Endothelial cell of umbilical vein (primary cell): ENCODE measurements at regions of chr14 and their contacts with region 1.

Region 1: GRCh38 chr14:22200977-22201605 is 387.9 kb downstream of the DAD1 start:
- DNase-seq: peak; percentile 49
- H3K4me3 ChIP-seq: no peak overlapping the region
- H3K27ac ChIP-seq: no peak overlapping the region
- H3K4me1 ChIP-seq: no peaks in the 10 kb centered on the region
- H3K27me3 ChIP-seq: peaks cover 7 to 11% of the 10 kb centered on the region in 2 experiments
- CTCF ChIP-seq: peak; percentile 56 to 66
- POLR2A ChIP-seq: no peak

Region 2: GRCh38 chr14:22112004-22112403 is 89.1 kb before region 1 on chr14:
- CTCF ChIA-PET with region 1: interaction called, 12 read pairs
- POLR2A ChIA-PET with region 1: no interaction called
- dilution Hi-C with region 1: no loop called
- intact Hi-C with region 1: no loop called
- DNase-seq: peak; percentile 25
- H3K4me3 ChIP-seq: no peak overlapping the region
- H3K27ac ChIP-seq: no peak overlapping the region
- H3K4me1 ChIP-seq: no peaks in the 10 kb centered on the region
- H3K27me3 ChIP-seq: peaks cover 5 to 19% of the 10 kb centered on the region in 2 experiments
- CTCF ChIP-seq: peak; percentile 48 to 64
- POLR2A ChIP-seq: no peak

Region 3: GRCh38 chr14:22185191-22185590 is 15.9 kb before region 1 on chr14:
- CTCF ChIA-PET with region 1: interaction called, 30 read pairs
- POLR2A ChIA-PET with region 1: no interaction called
- dilution Hi-C with region 1: no loop called
- intact Hi-C with region 1: no loop called
- DNase-seq: peak; percentile 13
- H3K4me3 ChIP-seq: no peak overlapping the region
- H3K27ac ChIP-seq: peak overlapping the region; percentile 43
- H3K4me1 ChIP-seq: peaks cover 10% of the 10 kb centered on the region
- H3K27me3 ChIP-seq: peaks cover 0 to 2% of the 10 kb centered on the region in 2 experiments
- CTCF ChIP-seq: peak in 1 of 2 donors; percentile 6
- POLR2A ChIP-seq: no peak

Region 4: GRCh38 chr14:22221508-22221907 is 20.4 kb after region 1 on chr14:
- CTCF ChIA-PET with region 1: interaction called, 22 read pairs
- POLR2A ChIA-PET with region 1: no interaction called
- dilution Hi-C with region 1: no loop called
- intact Hi-C with region 1: no loop called
- DNase-seq: peak; percentile 16
- H3K4me3 ChIP-seq: no peak overlapping the region
- H3K27ac ChIP-seq: no peak overlapping the region
- H3K4me1 ChIP-seq: peaks cover 10% of the 10 kb centered on the region
- H3K27me3 ChIP-seq: peaks cover 7 to 20% of the 10 kb centered on the region in 2 experiments
- CTCF ChIP-seq: peak; percentile 14 to 31
- POLR2A ChIP-seq: no peak

Region 5: GRCh38 chr14:22276913-22277816 is 76.1 kb after region 1 on chr14:
- CTCF ChIA-PET with region 1: interaction called, 6 read pairs
- POLR2A ChIA-PET with region 1: no interaction called
- dilution Hi-C with region 1: no loop called
- intact Hi-C with region 1: loop called (anchors 2 kb)
- DNase-seq: peak; percentile 37
- H3K4me3 ChIP-seq: no peak overlapping the region
- H3K27ac ChIP-seq: no peak overlapping the region
- H3K4me1 ChIP-seq: no peaks in the 10 kb centered on the region
- H3K27me3 ChIP-seq: peaks cover 8 to 15% of the 10 kb centered on the region in 2 experiments
- CTCF ChIP-seq: peak; percentile 44 to 50
- POLR2A ChIP-seq: no peak